ENCODE measurements at regions of chr20 and their contacts with region 1.

Region 1: GRCh38 chr20:43448748-43449535 is 8.8 kb upstream of the SRSF6 start:
- DNase-seq: peak; percentile 68
- ATAC-seq: peak; percentile 53
- H3K4me3 ChIP-seq: no peak overlapping the region
- H3K4me3 Mint-ChIP-seq: no peak overlapping the region
- H3K27ac ChIP-seq: no peak overlapping the region
- H3K27ac Mint-ChIP-seq: no peak overlapping the region
- H3K4me1 ChIP-seq: peaks cover 0 to 3% of the 10 kb centered on the region in 2 donors
- H3K4me1 Mint-ChIP-seq: peaks cover 2% of the 10 kb centered on the region
- H3K27me3 ChIP-seq: peaks cover 0 to 18% (median 4%) of the 10 kb centered on the region in 4 experiments
- H3K27me3 Mint-ChIP-seq: peaks cover 40% of the 10 kb centered on the region
- CTCF ChIP-seq: peak; percentile 82

Region 2: GRCh38 chr20:43322851-43323250 is 126.1 kb before region 1 on chr20:
- CTCF ChIA-PET with region 1: no interaction called
- POLR2A ChIA-PET with region 1: no interaction called
- intact Hi-C with region 1: no loop called
- DNase-seq: no peak
- ATAC-seq: no peak
- H3K4me3 ChIP-seq: no peak overlapping the region
- H3K4me3 Mint-ChIP-seq: no peak overlapping the region
- H3K27ac ChIP-seq: no peak overlapping the region
- H3K27ac Mint-ChIP-seq: no peak overlapping the region
- H3K4me1 ChIP-seq: no peaks in the 10 kb centered on the region
- H3K4me1 Mint-ChIP-seq: no peaks in the 10 kb centered on the region
- H3K27me3 ChIP-seq: no peaks in the 10 kb centered on the region
- H3K27me3 Mint-ChIP-seq: peaks cover 7% of the 10 kb centered on the region
- CTCF ChIP-seq: no peak

Region 3: DNA sequence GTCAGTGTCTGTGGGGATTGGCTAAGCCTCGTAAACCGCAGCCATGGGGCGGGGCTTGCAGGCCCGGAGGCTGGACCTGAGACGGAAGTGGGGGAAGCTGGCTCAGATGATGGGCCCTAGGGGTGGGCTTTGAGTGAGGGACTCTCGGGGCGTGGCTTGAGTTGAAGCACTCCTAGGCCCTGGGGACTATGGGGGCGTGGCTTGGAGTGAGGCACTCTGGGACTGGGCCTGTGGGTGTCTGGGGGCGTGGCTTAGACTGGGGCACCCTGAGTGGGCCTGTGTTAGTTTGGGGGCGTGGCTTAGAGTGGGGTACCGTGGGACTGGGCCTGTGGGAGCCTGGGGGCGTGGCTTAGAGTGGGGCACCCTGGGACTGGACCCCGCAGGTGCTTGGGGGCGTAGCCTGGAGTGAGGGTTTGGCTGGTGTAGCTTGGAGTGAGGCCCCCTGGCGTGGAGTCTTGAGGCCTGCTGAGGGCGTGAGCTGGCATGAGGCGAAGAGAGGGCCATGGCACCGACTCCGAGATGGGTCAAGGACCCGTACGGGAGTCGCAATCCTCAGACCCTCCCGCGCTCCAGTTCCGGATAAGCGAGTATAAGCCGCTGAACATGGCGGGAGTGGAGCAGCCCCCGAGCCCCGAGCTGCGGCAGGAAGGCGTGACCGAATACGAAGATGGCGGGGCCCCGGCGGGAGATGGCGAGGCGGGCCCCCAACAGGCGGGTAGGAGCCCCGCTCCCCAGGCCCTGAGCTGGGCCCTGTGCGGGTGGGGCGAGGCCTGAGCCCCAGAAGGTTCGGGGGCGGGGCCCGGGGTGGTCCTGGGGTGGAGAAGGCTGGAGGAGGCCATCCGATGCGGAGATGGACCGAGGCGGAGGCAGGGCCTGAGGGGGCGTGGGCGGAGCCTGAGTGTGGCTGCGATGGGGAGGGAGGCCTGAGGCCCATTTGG is 65.4 kb after region 1 on chr20:
- CTCF ChIA-PET with region 1: no interaction called
- POLR2A ChIA-PET with region 1: no interaction called
- intact Hi-C with region 1: loop called (anchors 2 kb)
- DNase-seq: peak; percentile 95
- ATAC-seq: peak; percentile 88
- H3K4me3 ChIP-seq: peak overlapping the region; percentile 44 to 71 (median 62)
- H3K4me3 Mint-ChIP-seq: peak overlapping the region; percentile 94
- H3K27ac ChIP-seq: peak overlapping the region; percentile 52 to 63
- H3K27ac Mint-ChIP-seq: peak overlapping the region; percentile 94
- H3K4me1 ChIP-seq: peaks cover 9 to 16% of the 10 kb centered on the region in 2 donors
- H3K4me1 Mint-ChIP-seq: peaks cover 24% of the 10 kb centered on the region
- H3K27me3 ChIP-seq: peaks cover 0 to 6% (median 2%) of the 10 kb centered on the region in 4 experiments
- H3K27me3 Mint-ChIP-seq: peaks cover 3% of the 10 kb centered on the region
- CTCF ChIP-seq: peak; percentile 34

Region 4: GRCh38 chr20:43691928-43692524 is 243.1 kb after region 1 on chr20:
- CTCF ChIA-PET with region 1: interaction called, 26 read pairs
- POLR2A ChIA-PET with region 1: no interaction called
- intact Hi-C with region 1: loop called (anchors 1 kb)
- DNase-seq: peak; percentile 83
- ATAC-seq: peak; percentile 93
- H3K4me3 ChIP-seq: no peak overlapping the region
- H3K4me3 Mint-ChIP-seq: no peak overlapping the region
- H3K27ac ChIP-seq: no peak overlapping the region
- H3K27ac Mint-ChIP-seq: peak overlapping the region; percentile 74
- H3K4me1 ChIP-seq: peaks cover 0 to 6% of the 10 kb centered on the region in 2 donors
- H3K4me1 Mint-ChIP-seq: peaks cover 6% of the 10 kb centered on the region
- H3K27me3 ChIP-seq: no peaks in the 10 kb centered on the region
- H3K27me3 Mint-ChIP-seq: no peaks in the 10 kb centered on the region
- CTCF ChIP-seq: peak; percentile 81

Region 5: GRCh38 chr20:44080646-44081267 is 631.8 kb after region 1 on chr20:
- CTCF ChIA-PET with region 1: interaction called, 15 read pairs
- POLR2A ChIA-PET with region 1: no interaction called
- intact Hi-C with region 1: no loop called
- DNase-seq: peak; percentile 81
- ATAC-seq: peak; percentile 97
- H3K4me3 ChIP-seq: no peak overlapping the region
- H3K4me3 Mint-ChIP-seq: no peak overlapping the region
- H3K27ac ChIP-seq: no peak overlapping the region
- H3K27ac Mint-ChIP-seq: peak overlapping the region; percentile 26
- H3K4me1 ChIP-seq: no peaks in the 10 kb centered on the region
- H3K4me1 Mint-ChIP-seq: peaks cover 8% of the 10 kb centered on the region
- H3K27me3 ChIP-seq: no peaks in the 10 kb centered on the region
- H3K27me3 Mint-ChIP-seq: no peaks in the 10 kb centered on the region
- CTCF ChIP-seq: peak; percentile 99